HepG2 (cell line): ENCODE measurements at regions of chr3 and their contacts with region 1.

Region 1: DNA sequence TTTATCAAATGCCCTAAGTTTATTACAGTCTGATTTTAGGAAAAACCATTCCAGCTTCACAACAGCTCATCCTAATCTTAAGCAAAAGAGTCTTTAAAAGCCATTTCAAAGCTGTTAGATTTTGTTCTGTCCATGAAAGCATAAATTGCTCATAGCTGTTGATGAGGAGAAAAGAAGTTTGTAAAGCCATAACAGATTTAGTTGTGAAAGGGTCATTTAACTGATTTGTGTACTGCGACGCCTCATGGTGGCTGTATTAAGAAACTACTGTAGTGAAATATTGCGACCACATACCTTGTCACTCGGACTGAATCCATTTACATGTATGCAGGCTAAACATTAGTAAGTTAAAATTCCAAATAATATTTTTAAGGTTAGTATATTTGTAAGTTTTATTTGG is 20.9 kb downstream of the BBX start:
- DNase-seq: peak; percentile 12
- ATAC-seq: no peak
- H3K4me3 ChIP-seq: no peak overlapping the region
- H3K27ac ChIP-seq: no peak overlapping the region
- H3K4me1 ChIP-seq: 0 out of 2 replicates have a peak, but pooled peaks cover 5% of the 10 kb centered on the region
- H3K27me3 ChIP-seq: no peaks in the 10 kb centered on the region
- CTCF ChIP-seq: peak; percentile 38; the same call in 1 of the 2 replicates
- EP300 ChIP-seq: no peak
- POLR2A ChIP-seq: no peak
- RAD21 ChIP-seq: no peak

Region 2: GRCh38 chr3:107271787-107272387 is 271.8 kb before region 1 on chr3:
- CTCF ChIA-PET with region 1: interaction called, 7 read pairs
- POLR2A ChIA-PET with region 1: no interaction called
- in situ Hi-C with region 1: no loop called
- intact Hi-C with region 1: loop called (anchors 1 kb)
- DNase-seq: peak; percentile 18
- ATAC-seq: peak; percentile 73
- H3K4me3 ChIP-seq: no peak overlapping the region
- H3K27ac ChIP-seq: no peak overlapping the region
- H3K4me1 ChIP-seq: no peaks in the 10 kb centered on the region
- H3K27me3 ChIP-seq: no peaks in the 10 kb centered on the region; a peak in 1 of 5 replicates
- CTCF ChIP-seq: peak; percentile 62
- EP300 ChIP-seq: no peak
- POLR2A ChIP-seq: no peak
- RAD21 ChIP-seq: no peak

Region 3: DNA sequence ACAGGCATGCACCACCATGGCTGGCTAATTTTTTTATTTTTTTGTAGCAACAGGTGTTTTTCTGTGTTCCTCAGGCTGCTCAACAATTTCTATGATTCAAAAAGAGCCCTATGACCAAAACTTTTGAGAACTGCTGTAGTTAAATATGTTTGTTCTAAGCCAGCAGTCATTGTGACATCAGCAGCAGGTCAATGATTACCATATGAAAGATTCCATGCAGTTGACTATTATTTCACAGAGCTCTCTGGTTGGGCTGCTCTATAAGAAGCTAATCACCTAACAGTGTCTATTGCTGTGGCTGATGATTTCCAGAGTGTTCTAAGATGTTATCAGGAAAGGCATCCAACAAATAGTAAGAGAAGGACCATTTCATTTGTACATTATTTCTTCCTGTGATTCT is 166.5 kb before region 1 on chr3 and contains the start of gene CCDC54:
- CTCF ChIA-PET with region 1: no interaction called
- POLR2A ChIA-PET with region 1: no interaction called
- in situ Hi-C with region 1: no loop called
- intact Hi-C with region 1: loop called (anchors 5 kb)
- DNase-seq: no peak
- ATAC-seq: no peak
- H3K4me3 ChIP-seq: no peak within 1 kb of the TSS
- H3K27ac ChIP-seq: no peak within 1 kb of the TSS
- H3K4me1 ChIP-seq: no peaks in the 10 kb centered on the region
- H3K27me3 ChIP-seq: no peaks in the 10 kb centered on the region
- CTCF ChIP-seq: no peak
- EP300 ChIP-seq: no peak
- POLR2A ChIP-seq: no peak
- RAD21 ChIP-seq: no peak
- total RNA-seq, gene CCDC54: not detected in 2 replicates

Region 4: GRCh38 chr3:107429320-107430181 is 114.1 kb before region 1 on chr3:
- CTCF ChIA-PET with region 1: no interaction called
- POLR2A ChIA-PET with region 1: no interaction called
- in situ Hi-C with region 1: no loop called
- intact Hi-C with region 1: loop called (anchors 5 kb)
- DNase-seq: peak; percentile 56
- ATAC-seq: peak; percentile 87
- H3K4me3 ChIP-seq: peak overlapping the region in 1 of 3 experiments; percentile 31; a peak in 1 of 6 replicates
- H3K27ac ChIP-seq: no peak overlapping the region
- H3K4me1 ChIP-seq: peaks cover 27% of the 10 kb centered on the region
- H3K27me3 ChIP-seq: peaks cover 0 to 25% of the 10 kb centered on the region in 2 experiments; a peak in 3 of 5 replicates
- CTCF ChIP-seq: peak; percentile 81
- EP300 ChIP-seq: no peak
- POLR2A ChIP-seq: no peak
- RAD21 ChIP-seq: peak; percentile 39; the same call in 1 of the 2 replicates

Region 5: DNA sequence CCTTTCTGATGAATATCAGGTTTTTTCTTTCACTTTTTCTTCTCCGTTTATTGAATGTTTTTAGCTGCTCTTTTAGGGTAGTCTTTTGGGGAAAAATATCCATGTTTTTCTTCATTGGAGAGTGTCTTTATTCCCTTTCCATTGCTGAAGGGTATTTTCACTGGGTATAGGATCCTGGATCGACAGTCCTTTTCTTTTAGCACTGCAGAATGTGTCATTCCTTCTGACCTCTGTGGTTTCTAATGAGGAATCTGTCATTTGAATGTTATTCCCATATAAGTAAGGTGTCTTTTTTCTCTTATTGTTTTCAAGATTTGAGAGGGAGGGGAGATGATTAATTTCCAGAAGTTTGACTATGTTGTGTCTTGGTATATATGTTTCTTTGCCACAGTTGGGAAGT is 75.9 kb after region 1 on chr3:
- CTCF ChIA-PET with region 1: no interaction called
- POLR2A ChIA-PET with region 1: no interaction called
- in situ Hi-C with region 1: no loop called
- intact Hi-C with region 1: no loop called
- DNase-seq: no peak
- ATAC-seq: no peak
- H3K4me3 ChIP-seq: no peak overlapping the region
- H3K27ac ChIP-seq: no peak overlapping the region
- H3K4me1 ChIP-seq: peaks cover 11% of the 10 kb centered on the region
- H3K27me3 ChIP-seq: no peaks in the 10 kb centered on the region
- CTCF ChIP-seq: no peak
- EP300 ChIP-seq: no peak
- POLR2A ChIP-seq: no peak
- RAD21 ChIP-seq: no peak

Region 6: DNA sequence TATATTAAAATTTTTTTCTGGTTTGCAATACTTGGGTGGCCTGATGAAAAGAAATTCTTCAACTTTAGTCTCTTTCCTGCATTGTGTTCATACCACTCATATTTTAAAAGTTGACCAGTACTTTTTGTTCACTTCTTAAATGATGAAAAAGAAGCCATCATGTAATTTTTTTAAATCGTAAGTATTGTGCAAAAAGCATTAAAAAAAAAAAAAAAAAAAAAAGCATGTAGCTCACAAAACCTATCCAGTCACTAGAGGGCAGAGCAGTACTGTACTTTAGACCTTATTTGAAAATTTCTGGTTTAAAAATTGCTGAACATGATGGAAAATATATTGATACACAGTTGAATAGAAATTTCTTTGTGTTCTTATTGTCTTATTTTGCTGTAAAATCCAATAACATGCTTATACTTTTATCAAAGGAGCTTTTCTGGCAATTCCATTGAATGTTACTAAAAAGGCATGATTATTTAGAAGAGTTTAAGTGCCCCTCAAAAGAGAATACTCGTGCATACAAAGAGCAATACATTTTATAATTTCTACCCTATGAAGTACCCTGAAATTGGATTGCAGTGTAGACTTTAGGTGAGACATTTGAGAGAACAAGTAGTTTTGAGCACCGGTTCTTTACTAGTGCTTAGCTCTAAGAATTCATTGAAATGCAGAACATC is 116.8 kb after region 1 on chr3:
- CTCF ChIA-PET with region 1: no interaction called
- POLR2A ChIA-PET with region 1: no interaction called
- in situ Hi-C with region 1: no loop called
- intact Hi-C with region 1: no loop called
- DNase-seq: peak; percentile 39
- ATAC-seq: no peak
- H3K4me3 ChIP-seq: no peak overlapping the region
- H3K27ac ChIP-seq: no peak overlapping the region
- H3K4me1 ChIP-seq: no peaks in the 10 kb centered on the region
- H3K27me3 ChIP-seq: no peaks in the 10 kb centered on the region
- CTCF ChIP-seq: peak; percentile 33; the same call in 1 of the 2 replicates
- EP300 ChIP-seq: no peak
- POLR2A ChIP-seq: no peak
- RAD21 ChIP-seq: no peak